Activated CD8-positive, alpha-beta T cell treated with anti-CD3 and anti-CD28 coated beads, Interleukin-2, amount 10 ng/mL, durations not matched to agents 7 days and 5 days (primary cell): ENCODE measurements at regions of chr3 and their contacts with region 1.

Region 1: GRCh38 chr3:43855674-43856299 is 165.0 kb downstream of the ABHD5 start:
- DNase-seq: peak; percentile 69
- ATAC-seq: peak; percentile 68
- H3K4me3 Mint-ChIP-seq: no peak overlapping the region
- H3K27ac Mint-ChIP-seq: no peak overlapping the region
- H3K4me1 Mint-ChIP-seq: no peaks in the 10 kb centered on the region
- H3K27me3 Mint-ChIP-seq: peaks cover 51% of the 10 kb centered on the region

Region 2: GRCh38 chr3:43870120-43870519 is 14.3 kb after region 1 on chr3:
- CTCF ChIA-PET with region 1: interaction called, 13 read pairs
- POLR2A ChIA-PET with region 1: no interaction called
- DNase-seq: no peak
- ATAC-seq: no peak
- H3K4me3 Mint-ChIP-seq: no peak overlapping the region
- H3K27ac Mint-ChIP-seq: no peak overlapping the region
- H3K4me1 Mint-ChIP-seq: no peaks in the 10 kb centered on the region
- H3K27me3 Mint-ChIP-seq: peaks cover 21% of the 10 kb centered on the region